ENCODE measurements at regions of chr6 and their contacts with region 1.

Region 1: GRCh38 chr6:165850434-165851019 is 187.5 kb upstream of the PDE10A start:
- DNase-seq: peak; percentile 60 to 88 (median 82)
- H3K4me3 ChIP-seq: peak overlapping the region; percentile 9
- H3K27ac ChIP-seq: no peak overlapping the region
- H3K4me1 ChIP-seq: peaks cover 5% of the 10 kb centered on the region
- H3K27me3 ChIP-seq: no peaks in the 10 kb centered on the region
- CTCF ChIP-seq: peak; percentile 87 to 89 (median 87)
- EP300 ChIP-seq: no peak
- POLR2A ChIP-seq: no peak

Region 2: DNA sequence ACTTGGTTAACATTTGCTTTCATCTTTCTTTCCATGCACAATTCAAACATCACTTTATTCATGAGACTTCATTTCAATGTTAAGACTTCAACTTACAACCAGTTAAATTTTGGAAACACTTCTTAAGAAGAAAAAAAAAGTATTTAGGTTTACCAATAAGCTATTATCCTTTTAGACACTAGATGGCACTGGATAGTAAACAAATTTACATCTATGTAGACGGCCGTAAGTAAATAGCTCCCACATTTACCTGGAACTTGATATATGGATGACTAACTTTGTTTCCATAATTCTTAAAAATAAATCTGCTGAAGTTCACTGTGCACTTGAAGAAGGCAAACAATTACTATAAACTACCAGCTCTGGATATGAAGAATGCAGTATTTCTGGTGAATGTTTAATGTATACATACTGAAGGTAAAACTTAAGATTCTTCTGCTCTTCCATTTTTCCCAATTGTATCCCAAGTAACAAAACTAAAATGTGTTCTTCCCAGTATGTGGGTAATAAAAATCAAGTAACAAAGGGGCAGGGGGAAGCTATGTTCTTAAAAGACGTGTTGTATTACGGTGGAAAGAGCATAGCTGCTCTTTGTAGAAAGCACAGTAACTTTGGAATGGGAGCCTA is 410.5 kb before region 1 on chr6:
- intact Hi-C with region 1: loop called in 2 of 4 experiments (anchors 10 kb)
- DNase-seq: no peak
- H3K4me3 ChIP-seq: no peak overlapping the region
- H3K27ac ChIP-seq: no peak overlapping the region
- H3K4me1 ChIP-seq: no peaks in the 10 kb centered on the region
- H3K27me3 ChIP-seq: no peaks in the 10 kb centered on the region
- CTCF ChIP-seq: peak in 2 of 3 donors; percentile 42 to 48
- EP300 ChIP-seq: no peak
- POLR2A ChIP-seq: no peak

Region 3: GRCh38 chr6:165729307-165729936 is 121.1 kb before region 1 on chr6:
- intact Hi-C with region 1: loop called in 1 of 4 experiments (anchors 10 kb)
- DNase-seq: peak in 1 of 5 donors; percentile 35
- H3K4me3 ChIP-seq: no peak overlapping the region
- H3K27ac ChIP-seq: no peak overlapping the region
- H3K4me1 ChIP-seq: no peaks in the 10 kb centered on the region
- H3K27me3 ChIP-seq: no peaks in the 10 kb centered on the region
- CTCF ChIP-seq: peak; percentile 13 to 47 (median 35)
- EP300 ChIP-seq: no peak
- POLR2A ChIP-seq: no peak